ENCODE measurements at regions of chr15 and their contacts with region 1.

Region 1: DNA sequence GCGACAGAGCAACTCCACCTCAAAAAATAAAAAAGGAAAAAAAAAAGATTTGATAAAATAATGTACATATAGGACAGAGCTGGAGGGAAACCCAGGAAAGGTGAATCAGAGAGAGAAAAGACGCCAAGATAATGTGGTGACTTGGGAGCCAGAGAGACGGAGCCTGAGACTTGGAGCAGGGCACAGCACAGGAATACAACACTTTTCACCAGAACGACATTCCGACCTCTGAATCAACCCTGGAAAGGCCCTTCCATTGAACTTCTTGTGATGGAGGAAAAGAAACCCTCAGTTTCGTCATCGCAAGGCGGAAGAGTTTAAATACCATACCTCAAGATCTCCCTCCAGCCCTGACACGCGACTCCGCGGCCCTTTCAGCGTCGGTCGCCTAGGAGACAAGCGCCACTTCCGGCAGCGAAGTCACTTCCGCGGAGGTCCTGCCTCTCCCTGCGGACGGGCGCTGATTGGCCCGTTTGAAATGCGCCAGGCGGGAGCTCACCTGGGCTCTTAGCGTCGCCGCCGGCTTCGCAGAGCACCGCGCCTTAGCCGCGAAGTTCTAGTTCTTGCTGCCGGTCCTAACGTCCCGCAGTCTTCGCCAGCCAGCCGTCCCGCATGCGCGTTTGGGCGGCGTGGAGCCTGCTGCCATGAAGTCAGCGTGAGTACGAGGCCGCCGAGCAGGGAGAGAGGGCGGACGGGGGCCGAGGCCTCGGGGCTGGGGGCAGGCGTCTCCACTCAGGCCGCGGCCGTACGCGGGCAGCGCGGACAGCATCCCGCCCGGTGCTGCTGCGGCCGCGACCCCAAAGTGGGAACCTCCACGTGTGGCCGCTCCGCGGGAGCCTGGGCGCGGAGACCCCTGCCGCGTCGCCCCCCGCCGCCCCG is at the start of gene KIF23:
- DNase-seq: peak; percentile 87 to 97 (median 91)
- ATAC-seq: peak; percentile 97 to 98
- H3K4me3 Mint-ChIP-seq: peak within 1 kb of the TSS; percentile 76 to 91 (median 87)
- H3K27ac Mint-ChIP-seq: peak within 1 kb of the TSS; percentile 29 to 91 (median 68)
- H3K4me1 Mint-ChIP-seq: peaks cover 4 to 9% (median 7%) of the 10 kb centered on the region in 4 donors
- H3K27me3 Mint-ChIP-seq: peaks cover 10 to 33% (median 13%) of the 10 kb centered on the region in 5 donors
- polyA plus RNA-seq, gene KIF23: not detected

Region 2: DNA sequence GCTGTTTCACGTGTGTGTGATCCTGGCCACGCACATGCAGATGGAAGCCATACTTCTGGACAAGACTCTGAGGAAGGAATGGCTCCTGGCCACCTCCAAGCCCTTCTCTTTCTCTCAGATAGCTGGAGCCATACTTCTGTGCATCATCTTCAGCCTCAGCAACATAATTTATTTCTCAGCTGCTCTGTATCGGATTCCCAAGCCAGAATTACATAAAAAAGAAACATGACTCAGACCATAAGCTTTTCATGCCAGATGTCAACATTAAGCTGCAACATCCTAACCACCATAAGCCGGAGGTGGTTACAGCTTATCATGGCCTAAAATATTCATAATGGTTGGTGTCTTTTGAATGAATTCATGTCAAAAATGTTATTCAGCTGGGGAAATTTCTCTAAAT is 10.5 kb before region 1 on chr15:
- POLR2A ChIA-PET with region 1: no interaction called
- DNase-seq: no peak
- ATAC-seq: no peak
- H3K4me3 Mint-ChIP-seq: no peak overlapping the region
- H3K27ac Mint-ChIP-seq: no peak overlapping the region
- H3K4me1 Mint-ChIP-seq: peaks cover 0 to 3% (median under 1%) of the 10 kb centered on the region in 4 donors
- H3K27me3 Mint-ChIP-seq: peaks cover 0 to 5% (median 2%) of the 10 kb centered on the region in 5 donors

Region 3: DNA sequence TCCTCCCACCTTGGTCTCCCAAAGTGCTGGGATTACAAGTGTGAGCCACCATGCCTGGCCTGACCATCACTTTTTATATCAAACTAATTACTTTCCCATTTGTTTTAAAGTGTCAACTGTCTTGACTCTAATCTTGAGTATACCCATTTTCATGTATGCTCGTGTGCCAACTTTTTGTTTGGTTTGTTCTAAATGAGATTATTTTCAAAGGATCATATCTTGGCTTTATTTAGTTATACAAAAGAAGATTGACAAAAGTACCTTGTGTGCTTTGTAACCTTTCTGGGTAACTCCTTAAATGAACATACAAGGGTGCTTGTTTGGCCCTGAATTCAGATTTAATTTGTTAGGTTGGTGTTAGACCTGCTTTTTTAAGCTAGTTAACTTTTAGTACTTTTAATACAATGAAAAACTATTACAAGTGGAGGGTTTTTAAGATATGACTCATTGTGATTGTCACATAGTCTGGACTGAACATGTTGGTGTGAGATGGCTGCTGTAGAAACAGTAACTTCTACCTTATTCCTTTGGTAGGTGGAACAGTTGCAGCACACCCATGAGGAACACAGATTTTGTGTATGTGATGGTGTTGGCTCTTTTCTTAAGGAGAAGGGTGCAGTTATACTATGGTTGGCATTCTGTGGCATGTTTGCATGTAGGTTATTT is 10.8 kb after region 1 on chr15:
- POLR2A ChIA-PET with region 1: no interaction called
- DNase-seq: no peak
- ATAC-seq: no peak
- H3K4me3 Mint-ChIP-seq: no peak overlapping the region
- H3K27ac Mint-ChIP-seq: no peak overlapping the region
- H3K4me1 Mint-ChIP-seq: no peaks in the 10 kb centered on the region
- H3K27me3 Mint-ChIP-seq: peaks cover 0 to 3% (median 1%) of the 10 kb centered on the region in 5 donors

Region 4: DNA sequence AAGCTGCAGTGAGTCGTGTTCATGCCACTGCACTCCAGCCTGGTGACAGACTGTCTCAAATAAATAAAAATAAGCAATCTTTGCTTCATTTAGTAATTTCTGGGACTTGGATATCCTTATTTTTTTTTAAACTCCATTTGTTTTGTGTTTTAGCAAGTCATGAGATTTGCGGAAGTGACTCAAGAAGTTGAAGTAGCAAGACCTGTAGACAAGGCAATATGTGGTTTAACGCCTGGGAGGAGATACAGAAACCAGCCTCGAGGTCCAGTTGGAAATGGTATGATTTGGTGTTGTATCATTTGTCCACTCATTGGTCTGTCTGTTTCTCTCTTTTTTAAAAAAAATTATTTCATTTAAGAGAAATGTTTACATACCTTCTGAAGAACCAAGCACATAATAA is 21.9 kb after region 1 on chr15:
- POLR2A ChIA-PET with region 1: no interaction called
- DNase-seq: no peak
- ATAC-seq: no peak
- H3K4me3 Mint-ChIP-seq: no peak overlapping the region
- H3K27ac Mint-ChIP-seq: no peak overlapping the region
- H3K4me1 Mint-ChIP-seq: no peaks in the 10 kb centered on the region
- H3K27me3 Mint-ChIP-seq: peaks cover 0 to 2% (median 0%) of the 10 kb centered on the region in 5 donors

Region 5: DNA sequence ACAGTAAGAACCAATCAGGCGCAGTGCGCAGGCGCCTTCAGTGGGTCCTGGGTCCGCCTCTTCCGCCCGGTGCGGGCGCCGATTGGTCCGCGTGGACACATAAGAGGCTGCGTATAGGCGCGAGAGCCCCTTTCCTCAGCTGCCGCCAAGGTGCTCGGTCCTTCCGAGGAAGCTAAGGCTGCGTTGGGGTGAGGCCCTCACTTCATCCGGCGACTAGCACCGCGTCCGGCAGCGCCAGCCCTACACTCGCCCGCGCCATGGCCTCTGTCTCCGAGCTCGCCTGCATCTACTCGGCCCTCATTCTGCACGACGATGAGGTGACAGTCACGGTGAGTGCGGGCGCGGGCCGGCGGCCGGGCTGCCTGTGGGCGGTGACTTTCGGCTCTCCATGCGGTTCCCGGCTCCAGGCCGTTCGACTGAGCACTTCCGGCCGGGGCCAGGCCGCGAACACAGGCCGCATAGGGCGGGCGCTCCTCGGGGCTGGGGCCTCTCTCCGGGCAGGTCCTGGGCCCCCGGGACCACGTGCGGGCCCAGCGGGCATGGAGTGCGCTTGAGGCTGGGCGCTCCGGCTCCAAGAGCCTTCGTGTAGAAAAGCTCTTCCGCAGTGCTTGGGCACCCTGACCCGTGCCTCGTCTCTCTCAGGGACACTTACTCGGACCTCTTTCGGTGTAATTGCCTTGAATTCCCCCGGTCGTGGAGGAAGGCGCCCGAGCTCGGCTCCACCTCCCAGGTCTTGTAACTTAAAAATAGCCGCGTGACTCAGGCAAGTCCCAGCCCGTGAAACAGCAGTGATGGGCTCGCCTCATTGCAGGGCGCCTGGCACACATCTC is 38.8 kb after region 1 on chr15 and contains the start of gene RPLP1:
- POLR2A ChIA-PET with region 1: interaction called, 19 read pairs
- DNase-seq: peak; percentile 92 to 98 (median 96)
- ATAC-seq: peak; percentile 80 to 86
- H3K4me3 Mint-ChIP-seq: peak within 1 kb of the TSS; percentile 93 to 100 (median 98)
- H3K27ac Mint-ChIP-seq: peak within 1 kb of the TSS; percentile 95 to 100 (median 99)
- H3K4me1 Mint-ChIP-seq: peaks cover 28 to 51% (median 47%) of the 10 kb centered on the region in 4 donors
- H3K27me3 Mint-ChIP-seq: no peaks in the 10 kb centered on the region
- polyA plus RNA-seq, gene RPLP1: 2,364 to 3,349 (median 3,055) TPM